Lower lobe of right lung (tissue), 2 donors: ENCODE measurements at regions of chr4 and their contacts with region 1.

Region 1: DNA sequence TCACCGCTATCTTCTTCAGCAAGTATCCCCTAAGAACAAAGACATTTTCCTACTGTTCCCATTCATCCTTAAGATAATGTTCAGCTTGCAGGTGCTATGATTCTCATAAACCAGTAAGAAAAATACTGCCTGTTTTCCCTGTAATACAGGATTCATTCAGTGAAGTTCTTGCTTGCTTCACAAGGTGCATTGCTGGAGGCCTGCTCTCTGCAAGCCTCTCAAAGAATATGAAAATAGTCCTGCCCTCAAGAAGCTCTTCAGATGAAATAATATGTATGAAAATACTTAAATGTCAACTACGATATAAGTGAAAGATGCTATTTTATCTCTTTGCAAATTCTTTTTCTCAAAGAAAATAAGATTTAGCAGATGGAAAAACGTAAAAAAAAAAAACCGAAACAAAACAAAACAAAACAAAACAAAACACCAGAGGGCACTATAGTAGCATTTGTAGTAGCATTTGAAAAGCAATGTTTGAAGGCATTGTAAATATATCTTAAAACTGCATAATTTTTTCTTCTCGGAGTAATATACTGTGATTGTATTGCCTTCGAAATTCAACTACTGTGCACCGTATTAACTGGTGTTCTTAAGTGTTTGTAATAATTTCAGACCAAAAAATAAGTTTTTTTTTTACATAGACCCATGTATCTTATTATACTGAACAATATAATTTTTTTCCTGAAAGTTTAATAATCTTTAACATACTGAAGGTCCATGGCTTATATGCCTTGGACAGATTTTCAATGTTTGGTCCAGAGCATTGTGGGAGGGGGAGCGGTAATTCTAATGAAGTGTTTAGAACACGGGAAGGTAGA is 26.0 kb downstream of the ADH4 start:
- DNase-seq: no peak
- ATAC-seq: no peak
- H3K4me3 ChIP-seq: no peak overlapping the region
- H3K27ac ChIP-seq: no peak overlapping the region
- H3K4me1 ChIP-seq: no peaks in the 10 kb centered on the region
- H3K27me3 ChIP-seq: no peaks in the 10 kb centered on the region
- CTCF ChIP-seq: peak; percentile 43

Region 2: GRCh38 chr4:99405433-99406115 is 287.5 kb after region 1 on chr4:
- intact Hi-C with region 1: loop called (anchors 10 kb)
- DNase-seq: no peak
- ATAC-seq: peak; percentile 77 to 84
- H3K4me3 ChIP-seq: no peak overlapping the region
- H3K27ac ChIP-seq: peak overlapping the region; percentile 72
- H3K4me1 ChIP-seq: peaks cover 18% of the 10 kb centered on the region
- H3K27me3 ChIP-seq: no peaks in the 10 kb centered on the region
- CTCF ChIP-seq: peak; percentile 92

Region 3: DNA sequence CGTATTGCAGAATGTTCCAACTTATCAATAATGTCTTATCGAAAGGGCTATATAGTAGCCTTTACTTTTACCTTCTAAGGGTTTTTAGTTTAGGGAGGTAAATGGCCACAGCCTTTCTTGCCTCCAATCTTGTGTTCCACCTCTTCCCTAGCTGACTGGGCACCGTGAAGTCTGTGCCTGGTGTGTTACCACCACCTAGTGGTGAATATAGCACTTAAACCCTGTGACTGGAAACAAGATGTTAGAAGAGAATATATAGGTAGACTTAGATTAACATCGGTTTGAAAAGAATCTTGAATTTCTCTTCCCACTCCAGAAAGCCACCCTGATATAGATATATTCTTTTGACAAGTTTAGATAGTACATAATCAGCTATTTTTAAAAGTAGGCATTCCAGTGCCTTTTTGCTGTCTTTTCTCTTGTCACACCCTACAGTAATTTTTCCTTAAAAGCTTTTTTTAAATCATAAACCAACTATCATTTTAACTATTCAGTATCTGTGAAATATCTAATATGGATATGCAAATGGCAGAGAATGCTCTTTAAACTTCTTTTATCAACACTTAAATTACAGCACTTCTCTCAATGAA is 344.9 kb after region 1 on chr4:
- intact Hi-C with region 1: loop called (anchors 10 kb)
- DNase-seq: no peak
- ATAC-seq: peak; percentile 89 to 94
- H3K4me3 ChIP-seq: no peak overlapping the region
- H3K27ac ChIP-seq: no peak overlapping the region
- H3K4me1 ChIP-seq: no peaks in the 10 kb centered on the region
- H3K27me3 ChIP-seq: no peaks in the 10 kb centered on the region
- CTCF ChIP-seq: peak; percentile 75